ENCODE measurements at regions of chr3 and their contacts with region 1.

Region 1: GRCh38 chr3:158801696-158802408 is at the start of gene MFSD1:
- DNase-seq: peak; percentile 86
- H3K4me3 Mint-ChIP-seq: peak within 1 kb of the TSS; percentile 87
- H3K27ac Mint-ChIP-seq: peak within 1 kb of the TSS; percentile 82
- H3K4me1 Mint-ChIP-seq: peaks cover 16% of the 10 kb centered on the region
- H3K27me3 Mint-ChIP-seq: peaks cover 13% of the 10 kb centered on the region
- total RNA-seq, gene MFSD1: 20.2 and 24.1 TPM in 2 replicates

Region 2: DNA sequence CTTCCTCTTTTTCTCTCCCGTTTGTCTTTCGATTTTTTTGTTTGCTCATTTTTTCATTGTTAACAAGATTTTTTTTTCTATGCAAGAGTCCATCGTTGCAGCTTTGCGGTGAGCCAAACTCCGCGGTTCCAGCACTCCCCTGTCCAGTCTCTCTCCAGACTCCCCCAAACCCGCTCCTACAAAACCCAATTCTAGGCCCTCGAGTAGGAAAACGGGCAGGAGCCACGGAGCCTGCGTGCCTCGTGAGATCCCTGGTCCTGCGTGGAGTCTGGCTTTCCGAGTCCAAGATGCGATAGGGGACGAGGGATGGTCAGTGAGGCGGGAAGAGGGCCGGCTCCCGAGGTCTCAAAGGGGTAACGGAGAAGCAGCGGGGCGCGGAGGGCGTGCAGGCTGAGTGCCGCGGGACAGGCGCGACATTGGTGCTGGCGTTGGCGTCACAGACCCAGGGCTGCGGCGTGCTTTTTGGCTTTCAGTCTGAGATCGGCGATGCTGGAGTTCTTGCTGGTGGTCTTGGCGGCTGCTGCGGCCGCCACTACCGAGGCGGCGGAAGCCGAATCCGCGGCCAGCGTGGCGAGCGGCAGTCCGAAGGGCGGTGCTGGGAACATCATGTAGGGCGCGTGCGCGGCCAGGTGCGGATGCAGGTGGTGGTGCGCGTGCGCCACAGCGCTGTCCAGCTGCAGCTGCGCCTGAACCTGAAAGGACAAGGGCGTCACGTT is 704.1 kb before region 1 on chr3:
- intact Hi-C with region 1: loop called (anchors 10 kb)
- DNase-seq: peak; percentile 73
- H3K4me3 Mint-ChIP-seq: peak overlapping the region; percentile 84
- H3K27ac Mint-ChIP-seq: no peak overlapping the region
- H3K4me1 Mint-ChIP-seq: peaks cover 9% of the 10 kb centered on the region
- H3K27me3 Mint-ChIP-seq: peaks cover 90% of the 10 kb centered on the region

Region 3: DNA sequence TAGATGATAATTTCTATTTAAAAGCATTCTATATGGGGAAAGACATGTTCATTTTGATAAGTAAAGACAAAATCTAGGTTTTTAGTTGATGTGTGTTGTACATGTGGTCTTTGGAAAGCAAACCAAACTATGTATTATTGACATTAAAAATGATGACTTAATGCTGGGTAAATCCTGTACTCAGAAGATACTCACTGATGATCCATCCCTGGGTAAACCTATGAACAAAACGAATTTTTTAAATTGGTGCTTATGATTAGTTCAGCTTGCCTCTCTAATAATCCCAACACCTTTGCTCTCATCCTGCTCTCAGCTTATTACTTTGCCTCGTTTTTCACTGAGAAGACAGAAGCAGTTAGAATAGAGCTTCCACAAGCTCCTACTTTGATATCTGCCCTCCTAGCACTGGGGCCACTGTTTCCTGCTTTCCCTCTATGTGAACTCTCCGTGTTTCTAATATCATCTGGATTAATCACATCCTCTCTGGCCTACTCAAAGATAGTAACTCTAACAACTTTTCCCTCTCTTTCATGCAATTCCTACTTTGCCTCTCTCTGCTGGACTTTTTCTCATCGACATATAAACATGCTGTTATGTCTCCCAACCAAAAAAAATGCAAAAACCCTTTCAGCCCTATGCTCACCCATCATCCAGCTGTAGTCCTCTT is 98.9 kb before region 1 on chr3:
- intact Hi-C with region 1: no loop called
- DNase-seq: no peak
- H3K4me3 Mint-ChIP-seq: no peak overlapping the region
- H3K27ac Mint-ChIP-seq: no peak overlapping the region
- H3K4me1 Mint-ChIP-seq: peaks cover 11% of the 10 kb centered on the region
- H3K27me3 Mint-ChIP-seq: no peaks in the 10 kb centered on the region

Measured in activated T-helper 2 cell treated with anti-CD3 and anti-CD28 coated beads, Interferon-gamma antibody, Interleukin-2, Interleukin-4, amounts not matched to agents 10 μg/mL and 5 μg/mL and 100 μg/mL, durations not matched to agents 14 hours and 24 hours and 36 hours (primary cell).